Activated T-helper 1 cell treated with anti-CD3 and anti-CD28 coated beads, Interleukin-12 subunit alpha, Interleukin-12 subunit beta, Interleukin-2, Interleukin-4 antibody, amounts not matched to agents 30 ng/mL and 10 ng/mL and 1 ng/mL, durations not matched to agents 14 hours and 24 hours and 36 hours (primary cell): ENCODE measurements at regions of chr5 and their contacts with region 1.

Region 1: GRCh38 chr5:111116550-111116949 is 24.4 kb downstream of the WDR36 start:
- DNase-seq: no peak
- H3K4me3 Mint-ChIP-seq: no peak overlapping the region
- H3K27ac Mint-ChIP-seq: no peak overlapping the region
- H3K4me1 Mint-ChIP-seq: peaks cover 19% of the 10 kb centered on the region
- H3K27me3 Mint-ChIP-seq: no peaks in the 10 kb centered on the region

Region 2: DNA sequence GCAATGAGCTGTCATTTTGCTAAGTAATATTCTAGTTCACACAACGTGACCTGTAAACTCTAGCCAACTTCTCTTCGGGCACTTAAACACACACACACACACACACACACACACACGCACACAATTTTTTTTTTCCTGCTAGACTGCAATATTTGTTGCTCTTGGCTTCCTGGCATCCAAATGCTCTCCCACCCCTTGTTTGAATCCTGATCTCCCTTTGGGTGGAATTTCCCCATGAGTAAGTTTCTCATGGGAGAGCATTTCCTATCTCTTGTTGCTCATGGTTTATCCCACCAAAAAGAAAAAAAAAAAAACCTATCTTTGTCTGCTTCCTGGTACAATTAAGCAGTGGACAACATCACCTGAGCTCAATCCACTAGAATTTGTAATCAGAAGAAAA is 99.7 kb before region 1 on chr5:
- intact Hi-C with region 1: no loop called
- DNase-seq: no peak
- H3K4me3 Mint-ChIP-seq: no peak overlapping the region
- H3K27ac Mint-ChIP-seq: no peak overlapping the region
- H3K4me1 Mint-ChIP-seq: no peaks in the 10 kb centered on the region
- H3K27me3 Mint-ChIP-seq: peaks cover 2% of the 10 kb centered on the region

Region 3: DNA sequence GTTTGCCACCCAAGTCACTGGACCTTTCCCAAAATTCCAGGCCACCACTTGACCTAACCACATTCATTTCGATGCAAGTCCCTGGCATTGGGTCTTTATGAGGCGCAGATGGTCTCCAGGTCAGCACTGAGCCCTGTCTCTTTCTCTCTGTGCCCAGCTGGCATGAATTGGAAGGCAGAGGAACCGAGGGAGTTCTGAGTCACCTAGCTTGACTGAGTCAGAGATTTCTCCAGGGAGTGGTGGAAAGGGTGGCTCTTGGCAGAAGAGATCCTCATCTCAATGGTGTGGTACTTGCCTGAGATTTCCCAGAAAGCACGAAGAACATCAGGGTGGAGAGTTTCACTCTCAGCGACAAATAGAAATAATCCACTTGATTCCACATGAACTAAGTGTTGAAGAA is 19.4 kb after region 1 on chr5:
- intact Hi-C with region 1: no loop called
- DNase-seq: no peak
- H3K4me3 Mint-ChIP-seq: no peak overlapping the region
- H3K27ac Mint-ChIP-seq: no peak overlapping the region
- H3K4me1 Mint-ChIP-seq: peaks cover 16% of the 10 kb centered on the region
- H3K27me3 Mint-ChIP-seq: no peaks in the 10 kb centered on the region

Region 4: DNA sequence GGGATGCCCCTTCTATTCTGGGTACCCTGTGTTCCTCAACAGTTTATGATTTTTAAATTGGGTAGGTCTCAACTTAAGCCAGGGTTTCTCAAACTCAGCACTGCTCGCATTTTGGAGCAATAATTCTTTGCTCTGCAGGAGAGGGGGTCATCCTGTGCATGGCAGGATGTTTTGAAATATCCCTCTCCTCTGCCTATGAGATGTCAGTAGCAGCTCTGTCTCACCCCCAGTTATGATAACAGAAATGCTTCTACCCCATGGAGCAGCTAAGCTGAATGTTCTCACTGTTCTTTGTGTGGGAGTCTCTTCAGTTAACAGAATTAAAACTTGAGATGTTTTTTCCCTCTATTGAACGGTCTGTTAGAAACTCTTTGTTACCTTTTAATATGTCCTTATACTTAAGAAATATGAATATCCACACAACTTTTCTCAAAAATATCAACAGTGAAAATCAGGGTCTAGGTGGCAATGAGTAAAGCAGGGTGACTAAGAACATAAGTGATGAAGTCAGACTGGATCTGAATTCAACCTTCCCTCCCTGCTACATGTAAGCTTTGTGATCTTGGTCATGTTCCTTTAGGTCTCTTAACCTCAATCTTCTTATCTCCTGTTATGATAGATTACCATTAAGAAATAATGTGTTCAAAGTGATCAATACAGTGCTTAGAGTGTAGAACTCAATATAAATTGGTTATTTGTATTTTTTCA is 196.6 kb after region 1 on chr5:
- intact Hi-C with region 1: no loop called
- DNase-seq: no peak
- H3K4me3 Mint-ChIP-seq: no peak overlapping the region
- H3K27ac Mint-ChIP-seq: peak overlapping the region; percentile 64
- H3K4me1 Mint-ChIP-seq: peaks cover 22% of the 10 kb centered on the region
- H3K27me3 Mint-ChIP-seq: no peaks in the 10 kb centered on the region

Region 5: GRCh38 chr5:111432883-111433536 is 316.5 kb after region 1 on chr5:
- intact Hi-C with region 1: no loop called
- DNase-seq: no peak
- H3K4me3 Mint-ChIP-seq: no peak overlapping the region
- H3K27ac Mint-ChIP-seq: no peak overlapping the region
- H3K4me1 Mint-ChIP-seq: peaks cover 15% of the 10 kb centered on the region
- H3K27me3 Mint-ChIP-seq: no peaks in the 10 kb centered on the region

Region 6: GRCh38 chr5:111495159-111495558 is 378.6 kb after region 1 on chr5:
- intact Hi-C with region 1: loop called (anchors 5 kb)
- DNase-seq: no peak
- H3K4me3 Mint-ChIP-seq: no peak overlapping the region
- H3K27ac Mint-ChIP-seq: no peak overlapping the region
- H3K4me1 Mint-ChIP-seq: peaks cover 43% of the 10 kb centered on the region
- H3K27me3 Mint-ChIP-seq: no peaks in the 10 kb centered on the region